ENCODE measurements at regions of chr17 and their contacts with region 1.

Region 1: DNA sequence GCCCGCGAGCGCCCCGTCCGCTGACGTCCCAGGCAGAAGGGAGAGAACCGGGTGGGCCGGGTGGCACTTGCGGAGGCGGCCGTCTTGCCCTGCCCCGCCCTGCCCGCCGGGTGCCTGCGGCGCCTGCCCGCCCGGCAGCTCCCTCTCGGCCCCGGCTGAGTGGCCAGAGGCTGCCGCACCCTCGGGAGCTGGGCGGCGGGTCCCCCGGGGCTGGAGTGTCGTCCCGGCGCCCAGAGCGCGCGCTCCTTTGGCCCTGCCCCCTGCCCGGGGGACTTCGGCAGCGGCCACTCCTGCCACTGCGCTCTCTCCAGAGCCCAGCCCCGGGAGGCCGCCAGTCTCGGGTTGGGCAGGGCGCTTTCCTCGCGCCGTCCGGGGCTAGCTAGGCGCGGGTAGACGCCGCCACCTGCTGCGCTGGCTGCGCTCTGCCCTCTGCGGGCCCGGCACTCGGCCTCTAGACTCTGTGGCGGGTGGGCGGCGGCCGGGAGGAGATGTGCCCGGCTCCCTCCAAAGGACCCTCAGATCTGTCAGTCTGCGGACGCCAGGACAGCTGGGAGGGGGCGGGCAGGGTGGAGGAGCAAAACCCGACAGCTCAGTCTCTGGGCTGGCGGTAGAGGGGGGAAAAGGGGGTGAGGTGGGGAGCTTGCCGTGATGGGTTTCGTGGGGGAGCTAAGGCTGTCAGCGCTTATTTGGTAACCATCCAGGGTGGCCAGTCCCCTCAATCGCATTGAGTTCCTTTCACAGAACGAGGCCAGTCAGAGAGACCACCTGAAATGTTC is at the start of gene ST6GALNAC2:
- DNase-seq: peak; percentile 59 to 94
- H3K4me3 ChIP-seq: peak within 1 kb of the TSS; percentile 52; the same call in 1 of the 2 replicates
- H3K27ac ChIP-seq: no peak within 1 kb of the TSS
- H3K4me1 ChIP-seq: no peaks in the 10 kb centered on the region
- H3K27me3 ChIP-seq: no peaks in the 10 kb centered on the region
- CTCF ChIP-seq: no peak; the same call in 1 of the 2 replicates
- total RNA-seq, gene ST6GALNAC2: 15.5 and 18.7 TPM in 2 replicates

Region 2: GRCh38 chr17:76427501-76428231 is 158.3 kb before region 1 on chr17:
- CTCF ChIA-PET with region 1: no interaction called
- POLR2A ChIA-PET with region 1: no interaction called
- intact Hi-C with region 1: no loop called
- DNase-seq: no peak
- H3K4me3 ChIP-seq: no peak overlapping the region
- H3K27ac ChIP-seq: no peak overlapping the region
- H3K4me1 ChIP-seq: no peaks in the 10 kb centered on the region
- H3K27me3 ChIP-seq: no peaks in the 10 kb centered on the region
- CTCF ChIP-seq: no peak

Region 3: DNA sequence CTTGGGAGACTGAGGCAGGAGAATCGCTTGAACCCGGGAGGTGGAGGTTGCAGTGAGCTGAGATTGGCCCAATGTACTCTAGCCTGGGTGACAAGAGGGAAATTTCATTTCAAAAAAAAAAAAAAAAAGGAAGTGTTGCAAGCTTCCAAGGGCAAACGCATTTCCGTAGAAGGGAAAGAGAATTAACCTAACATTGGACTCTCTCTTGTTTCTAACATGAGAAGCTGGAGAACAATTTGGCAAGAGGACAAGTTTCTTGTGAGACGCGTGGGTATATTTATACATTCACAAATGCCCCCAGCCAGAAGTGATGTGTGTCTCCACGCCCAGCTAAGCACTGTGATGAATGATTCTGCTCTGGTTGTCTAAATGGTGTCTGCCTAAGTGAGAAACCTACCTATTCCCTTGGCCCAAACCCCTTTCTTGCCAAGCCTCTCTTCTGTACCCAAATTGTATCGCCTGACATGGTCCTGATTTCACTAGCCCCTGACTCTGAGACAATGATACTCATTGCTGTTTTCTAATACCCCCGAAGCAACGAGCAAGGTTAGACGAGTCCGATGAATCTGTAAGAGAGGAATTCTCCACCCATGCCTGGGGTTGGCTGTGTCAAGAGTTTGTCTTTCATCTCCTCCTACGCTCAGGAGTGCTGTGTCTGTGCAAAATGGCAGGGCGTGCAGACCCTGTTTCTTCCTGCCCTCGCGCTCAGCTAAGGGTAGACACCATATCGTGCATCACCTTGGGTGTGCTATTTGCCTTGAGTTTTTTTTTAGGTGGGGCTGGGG is 13.9 kb after region 1 on chr17:
- CTCF ChIA-PET with region 1: interaction called, 12 read pairs
- POLR2A ChIA-PET with region 1: interaction called, 3 read pairs
- intact Hi-C with region 1: no loop called
- DNase-seq: no peak
- H3K4me3 ChIP-seq: no peak overlapping the region
- H3K27ac ChIP-seq: no peak overlapping the region
- H3K4me1 ChIP-seq: peaks cover 41% of the 10 kb centered on the region
- H3K27me3 ChIP-seq: no peaks in the 10 kb centered on the region
- CTCF ChIP-seq: no peak

Region 4: GRCh38 chr17:76641501-76641900 is 55.5 kb after region 1 on chr17:
- CTCF ChIA-PET with region 1: no interaction called
- POLR2A ChIA-PET with region 1: no interaction called
- intact Hi-C with region 1: no loop called
- DNase-seq: peak; percentile 47 to 93
- H3K4me3 ChIP-seq: no peak overlapping the region
- H3K27ac ChIP-seq: no peak overlapping the region
- H3K4me1 ChIP-seq: peaks cover 12% of the 10 kb centered on the region
- H3K27me3 ChIP-seq: no peaks in the 10 kb centered on the region
- CTCF ChIP-seq: no peak

Measured in PC-9 (cell line).